ENCODE measurements at regions of chr16 and their contacts with region 1.

Region 1: GRCh38 chr16:66660422-66661209 is 35.9 kb downstream of the CMTM4 start:
- DNase-seq: peak; percentile 52 to 92 (median 72)
- ATAC-seq: peak; percentile 98
- H3K4me3 ChIP-seq: no peak overlapping the region
- H3K27ac ChIP-seq: peak overlapping the region; percentile 77
- H3K4me1 ChIP-seq: peaks cover 19 to 30% of the 10 kb centered on the region in 2 experiments; a peak in 4 of 5 replicates
- H3K27me3 ChIP-seq: no peaks in the 10 kb centered on the region
- CTCF ChIP-seq: peak; percentile 48 to 58 (median 54)
- EP300 ChIP-seq: peak; percentile 71; the same call in 1 of the 2 replicates
- POLR2A ChIP-seq: peak; percentile 26; the same call in 1 of the 2 replicates
- RAD21 ChIP-seq: peak; percentile 13 to 51; a peak in 2 of 4 replicates

Region 2: DNA sequence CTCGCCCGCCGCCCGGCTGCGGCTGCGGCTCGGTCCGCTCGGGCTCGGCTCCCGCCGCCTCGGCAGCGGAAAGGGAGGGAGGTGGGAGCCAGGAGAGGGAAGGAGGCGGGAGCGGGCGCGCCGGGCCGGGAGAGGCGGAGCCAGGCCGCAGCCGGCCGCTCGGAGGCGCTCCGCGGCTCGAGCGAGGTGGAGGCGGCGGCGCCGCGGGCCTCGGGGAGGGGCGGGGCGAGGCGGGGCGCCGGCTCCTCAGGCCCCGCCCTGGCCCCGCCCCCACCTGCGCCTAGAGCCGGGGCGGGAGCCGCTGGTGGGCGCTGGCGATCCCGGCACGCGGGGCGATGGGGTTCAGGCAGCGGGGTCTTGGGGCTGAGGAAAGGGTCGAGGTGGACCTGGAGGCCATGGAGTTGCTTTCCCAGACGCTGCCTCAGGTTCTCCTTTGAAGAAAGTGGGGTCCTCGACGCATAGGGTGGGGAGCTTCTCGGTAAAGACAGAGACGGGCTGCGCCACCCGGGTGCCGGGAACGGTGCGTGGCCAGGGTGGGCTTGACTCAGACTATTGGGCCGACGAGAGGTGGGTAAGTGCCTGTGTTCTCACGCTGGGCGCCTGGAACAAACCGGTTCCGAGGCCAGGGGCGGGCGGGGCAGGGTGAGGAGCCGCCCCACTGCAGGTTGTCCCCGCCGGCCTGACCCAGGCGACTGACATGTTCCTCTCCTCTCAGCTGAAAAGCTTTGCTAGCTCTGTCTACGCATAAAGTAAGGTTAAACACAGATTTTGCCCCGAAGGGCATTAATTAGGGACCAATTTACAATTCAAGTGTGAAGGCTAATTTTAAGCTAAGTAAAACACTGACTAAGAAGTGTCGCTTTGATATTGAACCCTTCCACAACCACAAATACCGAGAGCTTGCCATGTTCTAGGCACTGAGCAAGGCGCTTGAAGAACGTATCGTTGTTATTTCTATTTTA is 36.3 kb after region 1 on chr16 and contains the start of gene CMTM4:
- CTCF ChIA-PET with region 1: interaction called, 4 read pairs
- POLR2A ChIA-PET with region 1: interaction called, 4 read pairs
- in situ Hi-C with region 1: no loop called
- intact Hi-C with region 1: loop called (anchors 1 kb)
- DNase-seq: peak; percentile 90 to 97 (median 96)
- ATAC-seq: peak; percentile 94
- H3K4me3 ChIP-seq: peak within 1 kb of the TSS; percentile 83
- H3K27ac ChIP-seq: peak within 1 kb of the TSS; percentile 87
- H3K4me1 ChIP-seq: peaks cover 19 to 25% of the 10 kb centered on the region in 2 experiments
- H3K27me3 ChIP-seq: no peaks in the 10 kb centered on the region
- CTCF ChIP-seq: peak; percentile 39 to 53 (median 41); a peak in 4 of 6 replicates
- EP300 ChIP-seq: no peak
- POLR2A ChIP-seq: peak; percentile 73
- RAD21 ChIP-seq: peak in 1 of 2 experiments; percentile 22; a peak in 1 of 4 replicates
- polyA plus RNA-seq, gene CMTM4: 2.0 to 2.3 TPM

Region 3: GRCh38 chr16:66740010-66740409 is 79.4 kb after region 1 on chr16:
- CTCF ChIA-PET with region 1: interaction called, 3 read pairs
- POLR2A ChIA-PET with region 1: interaction called, 4 read pairs
- in situ Hi-C with region 1: no loop called
- intact Hi-C with region 1: loop called (anchors 5 kb)
- DNase-seq: peak; percentile 56 to 73 (median 67)
- ATAC-seq: peak; percentile 80
- H3K4me3 ChIP-seq: no peak overlapping the region
- H3K27ac ChIP-seq: peak overlapping the region; percentile 43; the same call in 1 of the 3 replicates
- H3K4me1 ChIP-seq: peaks cover 12 to 24% of the 10 kb centered on the region in 2 experiments; a peak in 4 of 5 replicates
- H3K27me3 ChIP-seq: no peaks in the 10 kb centered on the region
- CTCF ChIP-seq: peak; percentile 59 to 72 (median 67); a peak in 5 of 6 replicates
- EP300 ChIP-seq: no peak
- POLR2A ChIP-seq: no peak
- RAD21 ChIP-seq: peak; percentile 15 to 38; a peak in 2 of 4 replicates

Region 4: DNA sequence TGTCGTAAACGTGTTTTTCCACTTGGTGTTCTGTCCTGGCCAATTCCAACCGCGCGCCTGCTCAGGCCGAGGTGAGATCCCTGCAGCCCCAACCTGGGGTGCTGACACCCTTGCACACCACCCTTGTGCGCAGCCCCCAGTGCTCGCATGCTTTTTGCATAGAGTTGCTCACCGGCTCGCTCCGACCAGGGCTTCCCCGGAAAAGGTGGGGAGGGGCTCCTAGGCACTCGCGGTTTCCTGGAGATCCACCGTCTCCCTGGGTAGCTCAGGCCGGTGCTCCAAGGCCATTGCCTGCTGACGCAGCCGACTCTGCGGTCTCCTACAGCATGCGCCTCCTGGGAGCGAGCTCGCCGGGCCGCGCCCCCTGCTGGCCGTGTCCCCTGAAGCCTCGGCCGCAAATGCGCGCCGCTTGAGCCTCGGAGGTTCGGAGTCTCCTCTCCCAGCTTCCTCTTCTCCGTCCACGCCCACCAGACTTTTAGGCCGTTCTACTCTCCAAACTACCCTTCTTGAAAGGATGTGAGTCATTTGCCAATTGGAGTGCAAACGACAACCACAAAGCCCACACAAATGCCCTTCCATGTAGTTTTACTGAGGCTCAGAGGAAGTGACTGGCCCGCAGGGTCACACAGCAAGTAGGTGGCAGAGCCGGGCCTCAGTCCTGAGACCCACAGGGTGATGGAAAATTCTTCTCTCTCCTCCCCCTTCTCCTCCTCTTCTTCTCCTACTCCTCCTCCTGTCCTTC is 212.5 kb after region 1 on chr16:
- CTCF ChIA-PET with region 1: interaction called, 4 read pairs
- POLR2A ChIA-PET with region 1: interaction called, 3 read pairs
- in situ Hi-C with region 1: no loop called
- intact Hi-C with region 1: loop called (anchors 2 kb)
- DNase-seq: peak; percentile 81 to 95 (median 86)
- ATAC-seq: peak; percentile 98
- H3K4me3 ChIP-seq: peak overlapping the region; percentile 20
- H3K27ac ChIP-seq: peak overlapping the region; percentile 68
- H3K4me1 ChIP-seq: peaks cover 6 to 16% of the 10 kb centered on the region in 2 experiments; a peak in 4 of 5 replicates
- H3K27me3 ChIP-seq: no peaks in the 10 kb centered on the region
- CTCF ChIP-seq: peak; percentile 94 to 97 (median 95)
- EP300 ChIP-seq: peak; percentile 4; the same call in 1 of the 2 replicates
- POLR2A ChIP-seq: peak; percentile 55; the same call in 1 of the 2 replicates
- RAD21 ChIP-seq: peak; percentile 49 to 72

Measured in K562 (cell line).